H1 (cell line): ENCODE measurements at regions of chr3 and their contacts with region 1.

Region 1: DNA sequence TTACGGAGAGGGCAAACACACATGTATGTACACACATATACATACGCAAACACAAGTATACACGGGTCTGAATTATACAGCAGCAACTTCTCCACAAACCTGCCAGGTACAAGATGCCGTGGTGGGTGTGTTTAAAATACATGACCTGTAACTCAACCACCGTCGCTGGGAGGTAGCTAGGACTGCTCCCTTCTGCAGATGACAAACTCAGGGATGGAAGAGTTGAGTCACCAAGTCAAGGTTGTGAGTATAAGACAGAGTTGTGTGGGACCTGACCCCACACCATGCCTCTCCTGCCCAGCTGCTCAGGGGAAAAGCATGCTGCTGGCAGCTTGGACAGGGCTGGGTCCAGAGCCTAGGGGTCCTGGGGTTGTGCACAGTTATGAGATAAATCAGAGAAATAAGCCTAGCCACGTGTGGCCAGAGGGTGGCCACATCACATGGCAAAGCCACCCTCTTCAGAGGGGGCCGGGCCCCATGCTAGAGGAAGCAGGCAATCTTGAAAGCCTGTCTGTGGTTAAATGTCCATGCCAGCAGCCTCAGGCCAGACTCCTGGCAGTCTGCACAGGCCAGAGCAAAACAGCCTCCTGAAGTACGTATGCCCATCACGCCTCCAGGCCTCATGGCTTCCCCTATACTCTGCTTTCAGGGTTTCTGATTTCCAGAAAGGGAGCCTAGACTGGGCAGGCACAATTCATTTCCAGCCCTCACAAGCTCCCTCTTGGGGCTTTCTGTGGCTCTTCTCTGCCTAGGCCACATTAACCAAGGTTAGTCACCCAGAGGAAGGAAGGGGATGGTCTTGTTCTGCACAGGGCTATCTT is 107.7 kb upstream of the RPL32 start:
- DNase-seq: no peak
- H3K4me3 ChIP-seq: no peak overlapping the region
- H3K27ac ChIP-seq: no peak overlapping the region
- H3K4me1 ChIP-seq: peaks cover 0 to 9% (median 6%) of the 10 kb centered on the region in 4 experiments; a peak in 6 of 7 replicates
- H3K27me3 ChIP-seq: no peaks in the 10 kb centered on the region
- CTCF ChIP-seq: peak in 1 of 3 experiments; percentile 9; a peak in 1 of 4 replicates
- EP300 ChIP-seq: no peak
- POLR2A ChIP-seq: no peak
- RAD21 ChIP-seq: no peak

Region 2: DNA sequence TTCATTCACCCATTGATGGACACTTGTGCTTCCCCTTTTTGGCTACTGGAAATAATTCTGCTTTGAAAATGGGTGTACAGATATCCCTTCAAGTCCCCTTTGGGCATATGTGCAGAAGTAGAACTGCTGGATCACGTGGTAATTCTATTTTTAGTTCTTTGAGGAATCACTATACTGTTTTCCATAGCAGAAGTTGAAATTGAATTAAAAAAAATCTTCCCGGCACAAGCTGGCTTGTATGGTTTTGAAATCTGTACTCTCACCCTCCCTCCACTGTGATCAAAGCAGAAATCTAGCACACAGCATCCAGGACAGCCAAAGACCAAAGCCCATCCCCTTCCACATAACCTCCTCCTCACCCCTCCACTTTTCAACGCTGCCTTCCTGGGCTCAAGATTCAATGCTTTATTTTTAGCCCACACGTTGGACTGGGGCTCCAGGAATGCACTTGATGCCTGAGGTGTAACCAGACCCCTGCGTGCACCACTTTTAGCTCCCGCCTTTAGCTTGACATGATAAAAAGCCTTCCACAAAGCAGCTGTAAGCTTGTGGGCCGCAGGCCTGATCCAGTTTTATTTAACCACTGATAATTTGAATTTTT is 219.9 kb before region 1 on chr3:
- CTCF ChIA-PET with region 1: no interaction called
- POLR2A ChIA-PET with region 1: no interaction called
- DNase-seq: no peak
- H3K4me3 ChIP-seq: no peak overlapping the region
- H3K27ac ChIP-seq: no peak overlapping the region
- H3K4me1 ChIP-seq: no peaks in the 10 kb centered on the region; a peak in 1 of 7 replicates
- H3K27me3 ChIP-seq: no peaks in the 10 kb centered on the region
- CTCF ChIP-seq: no peak
- EP300 ChIP-seq: no peak
- POLR2A ChIP-seq: no peak
- RAD21 ChIP-seq: no peak

Region 3: DNA sequence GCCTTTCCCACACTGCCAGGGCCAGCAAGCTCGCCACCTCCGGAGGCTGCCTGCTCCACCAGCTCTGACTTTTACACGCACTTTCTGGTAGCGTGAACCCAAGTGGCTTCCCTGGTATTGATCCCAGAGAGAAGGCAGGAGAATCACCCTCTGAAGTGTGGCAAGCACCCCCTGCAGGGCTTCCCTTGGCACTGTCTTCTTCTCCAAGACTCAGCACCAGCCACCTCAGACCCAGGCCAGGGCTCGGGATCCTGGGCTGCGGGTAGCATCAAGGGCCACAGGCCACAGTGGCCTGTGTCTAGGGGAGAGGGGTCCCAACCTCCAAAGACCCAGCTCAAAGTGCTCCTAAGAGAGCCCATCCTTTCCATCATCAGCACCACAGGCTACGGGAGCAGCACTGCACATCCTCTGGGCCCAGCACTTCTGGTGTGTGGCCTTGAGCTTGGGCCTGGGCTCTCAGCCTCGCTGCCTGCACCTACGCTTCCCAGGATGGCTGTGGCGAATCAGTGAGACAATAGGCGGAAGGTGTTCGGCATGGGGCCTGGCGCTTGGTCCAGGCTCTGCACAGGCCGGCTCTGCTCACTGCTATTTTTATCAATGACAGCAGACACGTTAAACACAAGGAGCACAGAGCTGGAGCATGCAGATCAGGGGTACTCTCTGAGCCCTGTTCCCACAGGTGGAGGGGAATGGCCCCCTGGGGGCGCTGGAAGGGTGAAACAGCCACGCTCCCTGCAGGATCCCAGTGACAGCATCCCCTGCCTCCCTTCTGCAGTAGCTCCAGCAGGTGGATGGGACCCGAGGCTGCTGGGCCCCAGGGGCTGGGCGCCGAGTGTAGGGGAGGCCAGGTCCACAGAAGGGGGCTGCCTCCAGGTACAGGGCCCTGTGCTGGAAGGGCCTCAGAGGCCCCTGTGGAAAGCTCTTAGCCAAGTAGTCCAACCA is 17.9 kb before region 1 on chr3:
- CTCF ChIA-PET with region 1: interaction called, 30 read pairs
- POLR2A ChIA-PET with region 1: no interaction called
- DNase-seq: no peak
- H3K4me3 ChIP-seq: no peak overlapping the region
- H3K27ac ChIP-seq: no peak overlapping the region
- H3K4me1 ChIP-seq: no peaks in the 10 kb centered on the region
- H3K27me3 ChIP-seq: no peaks in the 10 kb centered on the region
- CTCF ChIP-seq: no peak
- EP300 ChIP-seq: no peak
- POLR2A ChIP-seq: no peak
- RAD21 ChIP-seq: no peak

Region 4: GRCh38 chr3:12938258-12938711 is 10.8 kb before region 1 on chr3:
- CTCF ChIA-PET with region 1: interaction called, 18 read pairs
- POLR2A ChIA-PET with region 1: interaction called, 3 read pairs
- DNase-seq: no peak
- H3K4me3 ChIP-seq: no peak overlapping the region
- H3K27ac ChIP-seq: no peak overlapping the region
- H3K4me1 ChIP-seq: no peaks in the 10 kb centered on the region
- H3K27me3 ChIP-seq: no peaks in the 10 kb centered on the region
- CTCF ChIP-seq: no peak
- EP300 ChIP-seq: no peak
- POLR2A ChIP-seq: no peak
- RAD21 ChIP-seq: no peak

Region 5: GRCh38 chr3:12967606-12968351 is 18.7 kb after region 1 on chr3:
- CTCF ChIA-PET with region 1: interaction called, 52 read pairs
- POLR2A ChIA-PET with region 1: interaction called, 4 read pairs
- DNase-seq: peak; percentile 60 to 87
- H3K4me3 ChIP-seq: peak overlapping the region; percentile 52 to 87 (median 63)
- H3K27ac ChIP-seq: no peak overlapping the region; the same call in 1 of the 2 replicates
- H3K4me1 ChIP-seq: peaks cover 2 to 24% (median 7%) of the 10 kb centered on the region in 4 experiments; a peak in 6 of 7 replicates
- H3K27me3 ChIP-seq: peaks cover 0 to 12% (median 2%) of the 10 kb centered on the region in 4 experiments; a peak in 5 of 7 replicates
- CTCF ChIP-seq: no peak
- EP300 ChIP-seq: no peak
- POLR2A ChIP-seq: peak in 1 of 2 experiments; percentile 78; a peak in 2 of 3 replicates
- RAD21 ChIP-seq: no peak